ENCODE measurements at regions of chr10 and their contacts with region 1.

Region 1: GRCh38 chr10:71396084-71396720 is 518 bp upstream of the CDH23 start:
- DNase-seq: no peak
- H3K4me3 ChIP-seq: peak overlapping the region; percentile 30 to 73 (median 50)
- H3K27ac ChIP-seq: peak overlapping the region in 3 of 4 donors; percentile 54 to 64 (median 54)
- H3K4me1 ChIP-seq: peaks cover 11 to 31% (median 20%) of the 10 kb centered on the region in 3 donors
- H3K27me3 ChIP-seq: peaks cover 0 to 74% (median 7%) of the 10 kb centered on the region in 4 donors
- CTCF ChIP-seq: peak in 5 of 6 experiments; percentile 31 to 55 (median 48)
- POLR2A ChIP-seq: no peak

Region 2: GRCh38 chr10:71085689-71086438 is 310.3 kb before region 1 on chr10:
- intact Hi-C with region 1: no loop called
- DNase-seq: no peak
- H3K4me3 ChIP-seq: no peak overlapping the region
- H3K27ac ChIP-seq: no peak overlapping the region
- H3K4me1 ChIP-seq: peaks cover 0 to 12% (median 0%) of the 10 kb centered on the region in 3 donors
- H3K27me3 ChIP-seq: peaks cover 0 to 4% (median 0%) of the 10 kb centered on the region in 4 donors
- CTCF ChIP-seq: no peak
- POLR2A ChIP-seq: no peak

Region 3: DNA sequence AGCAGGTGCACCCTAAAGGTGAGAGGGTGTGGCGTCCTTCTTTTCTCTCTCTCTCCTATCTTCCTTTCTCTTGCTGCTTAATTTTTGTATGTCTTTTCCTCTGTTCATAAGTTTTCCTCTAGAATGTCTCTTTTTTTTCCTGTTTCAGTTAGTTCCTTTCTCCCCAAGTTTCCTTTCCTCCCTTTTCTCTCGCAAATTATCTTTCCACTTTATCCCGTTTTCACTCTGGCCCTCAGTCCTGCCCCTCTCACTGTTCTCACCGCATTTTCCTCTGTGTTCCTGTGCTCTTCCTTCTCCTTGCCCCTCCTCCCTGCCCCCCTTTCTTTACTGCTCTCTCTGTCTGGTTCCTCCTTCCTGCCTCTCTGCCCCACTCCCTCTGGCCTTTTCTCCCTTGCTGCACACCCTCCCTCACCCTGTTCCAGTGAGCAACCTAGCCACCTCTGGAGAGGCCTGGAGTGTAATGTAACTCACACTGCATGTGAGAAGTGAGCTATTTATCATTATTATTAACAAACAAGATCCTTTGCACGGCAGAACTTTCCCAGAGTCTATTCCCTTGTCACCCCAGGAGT is 164.9 kb after region 1 on chr10:
- intact Hi-C with region 1: loop called (anchors 5 kb)
- DNase-seq: no peak
- H3K4me3 ChIP-seq: no peak overlapping the region
- H3K27ac ChIP-seq: no peak overlapping the region
- H3K4me1 ChIP-seq: no peaks in the 10 kb centered on the region
- H3K27me3 ChIP-seq: peaks cover 0 to 12% (median 0%) of the 10 kb centered on the region in 4 donors
- CTCF ChIP-seq: no peak
- POLR2A ChIP-seq: no peak

Region 4: GRCh38 chr10:71812016-71812912 is 416.1 kb after region 1 on chr10:
- intact Hi-C with region 1: loop called (anchors 10 kb)
- DNase-seq: no peak
- H3K4me3 ChIP-seq: no peak overlapping the region
- H3K27ac ChIP-seq: no peak overlapping the region
- H3K4me1 ChIP-seq: peaks cover 0 to 15% (median 0%) of the 10 kb centered on the region in 3 donors
- H3K27me3 ChIP-seq: no peaks in the 10 kb centered on the region
- CTCF ChIP-seq: peak; percentile 56 to 95 (median 92)
- POLR2A ChIP-seq: no peak

Region 5: DNA sequence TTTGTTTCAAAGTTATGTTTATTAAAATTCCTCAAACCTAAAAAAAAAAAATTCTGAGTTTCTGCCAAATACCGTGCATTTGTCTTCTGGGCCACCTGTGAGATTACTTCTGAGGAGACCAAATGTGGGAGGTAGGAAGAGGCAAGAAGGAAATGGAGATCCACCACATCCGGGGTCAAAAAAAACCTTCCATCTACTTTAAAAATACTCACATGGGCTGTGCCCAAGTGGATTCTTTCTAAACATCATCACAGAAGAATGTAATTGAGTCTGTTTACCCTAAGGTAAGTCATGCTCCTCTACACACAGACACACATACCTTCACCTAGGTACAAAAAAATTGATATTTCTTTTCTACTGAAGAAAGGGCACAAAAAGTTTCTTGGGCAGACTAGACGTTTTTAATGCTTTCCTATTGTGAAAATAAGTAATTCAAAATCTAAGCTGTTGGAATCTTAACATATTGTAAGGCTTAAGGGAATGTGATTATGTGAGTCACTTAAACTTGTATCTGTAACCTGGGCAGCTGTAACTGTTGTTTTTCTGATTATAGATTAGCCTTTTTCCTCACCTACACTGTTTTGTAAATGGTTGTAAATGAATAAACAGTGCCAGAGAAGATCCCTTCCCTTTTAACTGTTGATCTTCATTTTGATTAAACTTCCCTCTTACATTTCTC is 711.3 kb after region 1 on chr10:
- intact Hi-C with region 1: no loop called
- DNase-seq: no peak
- H3K4me3 ChIP-seq: no peak overlapping the region
- H3K27ac ChIP-seq: no peak overlapping the region
- H3K4me1 ChIP-seq: peaks cover 0 to 5% (median 0%) of the 10 kb centered on the region in 3 donors
- H3K27me3 ChIP-seq: no peaks in the 10 kb centered on the region
- CTCF ChIP-seq: no peak
- POLR2A ChIP-seq: no peak

Measured in esophagus squamous epithelium (tissue), 5 donors.